Uterus (tissue), 4 donors: ENCODE measurements at regions of chr7 and their contacts with region 1.

Region 1: DNA sequence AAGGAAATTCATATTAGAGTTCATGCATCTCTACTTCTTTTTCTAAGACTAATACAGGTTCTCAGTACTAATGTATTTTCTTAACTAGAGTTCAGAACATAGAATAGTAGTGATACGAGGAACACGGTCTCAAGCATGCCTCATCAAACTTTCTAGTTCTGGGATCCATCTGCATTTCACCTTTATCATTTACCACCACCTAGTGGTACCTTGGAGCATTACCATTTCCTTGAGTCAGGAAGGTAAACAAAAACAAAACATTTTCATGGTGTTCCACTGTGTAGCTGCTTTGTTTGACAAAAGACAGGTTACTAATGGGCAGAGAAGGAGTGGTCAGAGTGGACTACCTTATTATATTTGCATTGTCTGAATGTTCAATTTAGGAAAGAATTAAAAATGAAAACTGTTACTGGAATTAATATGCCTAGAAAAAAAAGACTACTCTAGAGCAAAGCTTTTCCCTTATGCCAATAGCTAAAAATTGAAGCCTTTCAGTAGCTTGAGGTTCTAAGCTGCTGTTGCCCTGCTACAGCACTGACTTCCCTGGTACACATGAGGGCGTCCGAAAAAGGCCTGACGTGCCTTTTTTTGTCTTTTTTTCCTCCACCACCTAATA is 44.5 kb downstream of the STARD3NL start:
- DNase-seq: peak in 1 of 2 donors; percentile 40
- H3K4me3 ChIP-seq: no peak overlapping the region
- H3K27ac ChIP-seq: peak overlapping the region in 1 of 2 donors; percentile 63
- H3K4me1 ChIP-seq: no peaks in the 10 kb centered on the region
- H3K27me3 ChIP-seq: no peaks in the 10 kb centered on the region
- CTCF ChIP-seq: peak; percentile 91 to 94 (median 92)
- POLR2A ChIP-seq: no peak

Region 2: DNA sequence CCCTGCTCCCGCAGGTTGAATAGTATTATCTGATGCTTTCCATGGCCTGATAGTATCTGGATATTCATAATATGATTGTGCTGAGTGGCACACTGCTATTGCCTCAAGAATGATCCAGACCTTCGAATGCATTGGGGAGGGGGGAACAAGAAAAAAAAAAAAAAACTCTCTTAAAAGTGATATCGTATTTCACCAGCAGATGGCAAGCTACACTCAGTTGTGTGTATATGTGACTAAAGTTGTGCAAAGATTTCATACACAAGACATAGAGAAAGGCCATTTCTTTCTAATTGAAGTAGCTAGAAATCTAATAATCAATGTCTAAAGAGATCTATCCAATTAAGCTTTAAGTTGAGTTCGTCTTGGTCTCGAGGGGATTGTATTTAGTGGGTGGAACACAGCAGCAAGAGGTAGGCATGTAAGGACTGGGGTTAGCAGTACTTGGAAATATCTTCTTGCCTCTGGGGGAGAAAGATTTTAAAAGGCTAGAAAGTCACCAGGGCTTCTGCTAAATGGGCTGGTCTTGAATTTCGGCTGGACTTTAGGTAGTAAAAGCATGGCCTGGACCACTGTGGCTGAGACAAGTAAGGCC is 321.3 kb before region 1 on chr7:
- intact Hi-C with region 1: loop called (anchors 10 kb)
- DNase-seq: no peak
- H3K4me3 ChIP-seq: no peak overlapping the region
- H3K27ac ChIP-seq: peak overlapping the region in 1 of 2 donors; percentile 14
- H3K4me1 ChIP-seq: no peaks in the 10 kb centered on the region
- H3K27me3 ChIP-seq: no peaks in the 10 kb centered on the region
- CTCF ChIP-seq: peak; percentile 60 to 71 (median 66)
- POLR2A ChIP-seq: no peak

Region 3: GRCh38 chr7:38107486-38107893 is 115.1 kb before region 1 on chr7:
- intact Hi-C with region 1: loop called (anchors 10 kb)
- DNase-seq: peak; percentile 47 to 67
- H3K4me3 ChIP-seq: no peak overlapping the region
- H3K27ac ChIP-seq: no peak overlapping the region
- H3K4me1 ChIP-seq: no peaks in the 10 kb centered on the region
- H3K27me3 ChIP-seq: no peaks in the 10 kb centered on the region
- CTCF ChIP-seq: peak; percentile 61 to 79 (median 68)
- POLR2A ChIP-seq: no peak